IMR-90 (cell line): ENCODE measurements at regions of chr11 and their contacts with region 1.

Region 1: DNA sequence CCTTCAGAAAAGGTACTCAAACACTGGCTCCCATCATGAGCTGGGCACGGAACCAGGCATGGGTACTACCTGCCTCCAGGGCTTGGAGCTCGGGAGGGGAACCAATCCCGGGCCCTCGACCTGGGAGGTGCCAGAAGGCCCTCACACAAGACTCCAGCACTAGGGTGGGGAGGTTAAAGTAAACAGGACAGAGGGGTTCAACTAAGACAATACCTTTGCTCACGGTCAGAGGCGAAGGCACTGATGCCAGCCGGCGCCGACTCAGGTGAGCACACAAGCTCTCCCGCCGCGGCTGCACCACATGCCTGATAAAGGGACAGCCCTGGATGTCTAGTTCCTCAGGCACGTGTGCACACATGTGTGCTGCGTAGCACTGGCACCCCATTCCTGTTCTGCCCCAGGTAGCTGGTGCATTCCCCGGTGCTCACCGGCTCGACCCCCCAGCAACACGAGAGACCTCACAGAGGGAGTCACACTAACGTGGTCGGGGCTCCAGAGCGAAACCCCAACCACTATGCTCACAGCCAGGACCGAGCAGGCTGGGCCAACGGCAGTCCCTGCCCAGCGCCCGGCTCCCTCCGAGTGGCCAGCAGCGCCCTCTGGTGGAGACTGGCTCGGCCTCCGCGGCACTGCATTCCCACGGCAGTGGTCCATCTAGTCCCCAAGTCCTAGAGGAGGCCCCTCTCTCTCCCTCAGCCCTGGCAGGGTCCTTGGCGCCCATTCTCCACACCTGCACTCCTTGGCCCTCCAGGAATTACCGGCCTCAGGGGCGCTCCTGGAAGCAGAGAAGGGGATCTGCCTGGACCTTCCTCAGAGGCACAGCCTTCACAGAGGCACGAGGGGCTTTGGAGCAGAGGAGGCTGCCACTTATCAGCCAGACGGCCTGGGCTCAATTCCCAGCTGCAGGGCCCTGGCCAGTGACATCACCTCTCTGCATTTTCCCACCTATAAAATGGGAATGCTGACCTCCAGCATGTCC is 28.8 kb upstream of the MOB2 start:
- DNase-seq: peak; percentile 47
- ATAC-seq: peak; percentile 92
- H3K4me3 ChIP-seq: no peak overlapping the region
- H3K27ac ChIP-seq: no peak overlapping the region
- H3K4me1 ChIP-seq: peaks cover 13% of the 10 kb centered on the region
- H3K27me3 ChIP-seq: no peaks in the 10 kb centered on the region
- CTCF ChIP-seq: peak; percentile 94
- POLR2A ChIP-seq: no peak; the same call in 1 of the 2 replicates
- RAD21 ChIP-seq: peak; percentile 93

Region 2: DNA sequence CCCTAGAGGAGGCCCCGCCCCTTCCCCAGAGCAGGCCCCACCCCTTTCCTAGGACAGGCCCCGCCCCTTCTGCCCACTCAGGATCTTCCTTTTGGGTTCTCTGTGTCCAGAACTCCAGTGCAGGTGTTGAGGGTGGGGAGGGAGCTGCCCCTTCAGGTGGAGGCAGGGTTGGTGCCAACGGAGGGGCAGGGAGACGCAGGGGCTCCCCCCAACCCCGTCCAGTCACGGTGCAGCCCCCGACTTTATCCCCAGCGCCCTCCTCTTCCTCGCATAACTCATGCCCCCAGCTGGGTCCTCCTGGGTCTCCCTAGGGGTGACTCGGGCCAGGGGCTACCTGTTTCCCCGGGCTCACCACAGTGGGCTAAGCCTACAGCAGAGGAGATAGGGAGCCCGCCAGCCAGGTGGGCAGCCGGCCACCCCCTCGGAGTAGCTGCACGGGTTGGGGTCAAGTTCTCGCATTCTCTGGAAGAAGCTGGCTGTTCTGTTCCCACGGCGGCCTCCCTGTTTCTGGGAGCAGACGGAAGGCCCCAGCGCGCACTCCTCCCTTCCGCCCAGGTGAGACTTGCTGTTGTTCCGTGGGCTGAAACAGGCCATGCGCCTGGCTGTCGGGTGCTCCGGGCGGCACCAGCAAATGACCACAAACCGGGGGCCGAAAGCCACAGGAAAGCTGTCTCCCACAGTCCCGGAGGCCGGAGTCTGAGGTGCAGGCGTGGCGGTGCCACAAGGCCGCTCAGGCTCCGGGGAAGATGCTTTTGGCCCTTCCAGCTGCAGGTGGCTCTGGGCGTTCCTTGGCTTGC is 401.8 kb before region 1 on chr11:
- CTCF ChIA-PET with region 1: no interaction called
- POLR2A ChIA-PET with region 1: no interaction called
- dilution Hi-C with region 1: no loop called
- in situ Hi-C with region 1: no loop called
- intact Hi-C with region 1: loop called (anchors 1 kb)
- DNase-seq: no peak
- ATAC-seq: no peak
- H3K4me3 ChIP-seq: no peak overlapping the region
- H3K27ac ChIP-seq: no peak overlapping the region
- H3K4me1 ChIP-seq: no peaks in the 10 kb centered on the region
- H3K27me3 ChIP-seq: peaks cover 10% of the 10 kb centered on the region; the same call in 1 of the 2 replicates
- CTCF ChIP-seq: no peak
- POLR2A ChIP-seq: no peak
- RAD21 ChIP-seq: no peak

Region 3: DNA sequence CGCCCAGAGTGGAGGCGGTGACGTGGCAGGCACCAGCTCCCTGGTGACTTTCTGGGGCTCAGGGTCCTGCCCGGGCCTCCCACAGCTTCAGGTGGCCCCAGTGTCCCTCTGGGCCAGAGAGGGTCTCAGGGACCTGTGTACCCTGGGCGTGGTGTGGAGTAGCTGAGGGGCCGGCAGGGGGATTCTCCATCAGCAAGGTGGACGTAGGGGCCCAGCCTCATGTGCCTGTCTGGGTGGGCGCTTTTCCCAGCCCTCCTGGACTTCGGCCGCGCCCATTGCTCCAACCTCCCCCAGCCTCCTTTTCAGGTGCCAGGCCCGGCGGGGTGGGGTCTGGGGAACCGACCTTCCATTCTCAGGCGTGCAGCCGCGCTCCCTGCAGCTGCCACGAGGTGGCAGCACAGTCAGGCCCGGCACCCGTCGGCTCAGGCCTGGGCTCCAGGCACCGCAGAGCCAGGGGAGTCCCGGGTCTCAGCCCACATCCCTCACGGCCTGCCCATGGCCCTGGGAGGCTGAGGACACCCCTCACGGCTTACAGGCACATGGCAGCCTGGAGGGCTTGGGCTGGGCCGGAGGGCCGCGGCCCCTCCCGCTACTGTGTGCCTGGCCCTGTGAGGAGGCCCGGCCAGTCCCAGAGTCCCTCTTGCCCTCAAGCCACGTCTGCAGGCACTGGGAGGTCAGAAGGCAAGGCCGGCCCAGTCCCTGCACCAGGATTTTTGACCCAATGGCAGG is 312.4 kb before region 1 on chr11:
- CTCF ChIA-PET with region 1: no interaction called
- POLR2A ChIA-PET with region 1: no interaction called
- dilution Hi-C with region 1: no loop called
- in situ Hi-C with region 1: loop called (anchors 25 kb)
- intact Hi-C with region 1: loop called (anchors 1 kb)
- DNase-seq: peak; percentile 12
- ATAC-seq: peak; percentile 97
- H3K4me3 ChIP-seq: no peak overlapping the region
- H3K27ac ChIP-seq: no peak overlapping the region
- H3K4me1 ChIP-seq: no peaks in the 10 kb centered on the region
- H3K27me3 ChIP-seq: peaks cover 16% of the 10 kb centered on the region; the same call in 1 of the 2 replicates
- CTCF ChIP-seq: peak; percentile 86
- POLR2A ChIP-seq: no peak
- RAD21 ChIP-seq: peak; percentile 84

Region 4: GRCh38 chr11:1262172-1263006 is 253.0 kb before region 1 on chr11:
- CTCF ChIA-PET with region 1: no interaction called
- POLR2A ChIA-PET with region 1: no interaction called
- dilution Hi-C with region 1: no loop called
- in situ Hi-C with region 1: no loop called
- intact Hi-C with region 1: loop called (anchors 1 kb)
- DNase-seq: peak; percentile 89
- ATAC-seq: peak; percentile 98
- H3K4me3 ChIP-seq: peak overlapping the region; percentile 35
- H3K27ac ChIP-seq: peak overlapping the region; percentile 5; the same call in 1 of the 2 replicates
- H3K4me1 ChIP-seq: peaks cover 11% of the 10 kb centered on the region
- H3K27me3 ChIP-seq: no peaks in the 10 kb centered on the region
- CTCF ChIP-seq: no peak
- POLR2A ChIP-seq: 0 out of 2 replicates have a peak, but pooled peaks have one; percentile 38
- RAD21 ChIP-seq: no peak

Region 5: GRCh38 chr11:1293631-1294030 is 221.7 kb before region 1 on chr11:
- CTCF ChIA-PET with region 1: no interaction called
- POLR2A ChIA-PET with region 1: no interaction called
- dilution Hi-C with region 1: no loop called
- in situ Hi-C with region 1: no loop called
- intact Hi-C with region 1: loop called (anchors 1 kb)
- DNase-seq: no peak
- ATAC-seq: peak; percentile 42; the same call in 1 of the 2 replicates
- H3K4me3 ChIP-seq: no peak overlapping the region
- H3K27ac ChIP-seq: no peak overlapping the region
- H3K4me1 ChIP-seq: no peaks in the 10 kb centered on the region
- H3K27me3 ChIP-seq: no peaks in the 10 kb centered on the region
- CTCF ChIP-seq: peak; percentile 23; the same call in 1 of the 2 replicates
- POLR2A ChIP-seq: no peak
- RAD21 ChIP-seq: peak; percentile 36

Region 6: GRCh38 chr11:1422481-1422880 is 92.9 kb before region 1 on chr11:
- CTCF ChIA-PET with region 1: no interaction called
- POLR2A ChIA-PET with region 1: no interaction called
- dilution Hi-C with region 1: no loop called
- in situ Hi-C with region 1: no loop called
- intact Hi-C with region 1: no loop called
- DNase-seq: no peak
- ATAC-seq: peak; percentile 79
- H3K4me3 ChIP-seq: no peak overlapping the region
- H3K27ac ChIP-seq: no peak overlapping the region
- H3K4me1 ChIP-seq: no peaks in the 10 kb centered on the region
- H3K27me3 ChIP-seq: no peaks in the 10 kb centered on the region
- CTCF ChIP-seq: no peak
- POLR2A ChIP-seq: no peak
- RAD21 ChIP-seq: no peak

Region 7: GRCh38 chr11:1598816-1599215 is 83.4 kb after region 1 on chr11:
- CTCF ChIA-PET with region 1: no interaction called
- POLR2A ChIA-PET with region 1: no interaction called
- dilution Hi-C with region 1: no loop called
- in situ Hi-C with region 1: no loop called
- intact Hi-C with region 1: no loop called
- DNase-seq: no peak
- ATAC-seq: no peak
- H3K4me3 ChIP-seq: no peak overlapping the region
- H3K27ac ChIP-seq: no peak overlapping the region
- H3K4me1 ChIP-seq: no peaks in the 10 kb centered on the region
- H3K27me3 ChIP-seq: peaks cover 40% of the 10 kb centered on the region
- CTCF ChIP-seq: no peak
- POLR2A ChIP-seq: no peak
- RAD21 ChIP-seq: no peak